Activated CD4-positive, alpha-beta T cell treated with anti-CD3 and anti-CD28 coated beads for 36 hours (primary cell): ENCODE measurements at regions of chr12 and their contacts with region 1.

Region 1: DNA sequence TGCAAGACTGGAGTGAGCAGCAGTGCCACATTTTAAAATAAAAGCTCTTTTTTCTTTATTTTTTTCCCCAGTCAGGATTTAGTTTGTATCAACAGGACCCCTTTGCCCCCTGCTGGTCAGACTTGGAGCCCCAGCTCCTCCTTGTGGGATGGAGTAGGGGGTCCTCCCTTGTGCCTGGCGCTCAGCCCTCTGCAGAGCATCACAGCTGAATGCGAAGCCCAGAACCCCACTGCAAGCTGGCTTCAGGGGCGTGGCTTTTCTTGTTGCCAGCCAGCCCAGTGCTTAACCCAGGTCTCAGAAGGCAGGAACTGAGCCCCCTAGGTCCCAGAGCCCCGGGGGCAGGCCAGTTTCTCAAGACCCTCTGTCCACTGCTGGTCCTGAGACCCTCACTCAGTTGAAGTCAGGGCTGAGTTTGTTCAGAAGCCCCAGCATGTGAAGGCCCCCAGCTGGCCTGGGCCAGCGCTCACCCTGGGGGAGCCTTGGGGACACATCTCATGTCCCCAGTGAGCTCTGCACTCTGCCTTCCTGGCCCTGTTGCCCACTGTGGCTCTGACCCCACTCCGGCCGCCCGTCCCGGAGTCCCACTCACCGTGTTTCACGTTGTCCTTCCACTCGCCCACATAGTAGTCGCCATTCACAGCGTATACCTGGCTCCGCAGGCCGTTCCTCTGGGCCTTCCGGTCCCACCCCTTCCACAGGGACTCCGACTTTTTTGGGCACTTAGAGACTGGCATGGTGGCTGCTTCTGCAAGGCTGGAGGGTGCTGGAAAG is 519 bp downstream of the MORN3 start:
- DNase-seq: peak; percentile 80
- ATAC-seq: no peak
- H3K4me3 Mint-ChIP-seq: no peak overlapping the region
- H3K27ac Mint-ChIP-seq: no peak overlapping the region
- H3K4me1 Mint-ChIP-seq: peaks cover 57% of the 10 kb centered on the region
- H3K27me3 Mint-ChIP-seq: no peaks in the 10 kb centered on the region

Region 2: GRCh38 chr12:121351820-121352681 is 316.9 kb before region 1 on chr12 and contains the start of gene ANAPC5:
- CTCF ChIA-PET with region 1: no interaction called
- POLR2A ChIA-PET with region 1: no interaction called
- intact Hi-C with region 1: loop called in 1 of 2 experiments (anchors 1 kb)
- DNase-seq: peak; percentile 94
- ATAC-seq: peak; percentile 99
- H3K4me3 Mint-ChIP-seq: peak within 1 kb of the TSS; percentile 92
- H3K27ac Mint-ChIP-seq: peak within 1 kb of the TSS; percentile 97
- H3K4me1 Mint-ChIP-seq: peaks cover 24% of the 10 kb centered on the region
- H3K27me3 Mint-ChIP-seq: peaks cover under 1% of the 10 kb centered on the region
- total RNA-seq, gene ANAPC5: 113 to 118 TPM

Region 3: DNA sequence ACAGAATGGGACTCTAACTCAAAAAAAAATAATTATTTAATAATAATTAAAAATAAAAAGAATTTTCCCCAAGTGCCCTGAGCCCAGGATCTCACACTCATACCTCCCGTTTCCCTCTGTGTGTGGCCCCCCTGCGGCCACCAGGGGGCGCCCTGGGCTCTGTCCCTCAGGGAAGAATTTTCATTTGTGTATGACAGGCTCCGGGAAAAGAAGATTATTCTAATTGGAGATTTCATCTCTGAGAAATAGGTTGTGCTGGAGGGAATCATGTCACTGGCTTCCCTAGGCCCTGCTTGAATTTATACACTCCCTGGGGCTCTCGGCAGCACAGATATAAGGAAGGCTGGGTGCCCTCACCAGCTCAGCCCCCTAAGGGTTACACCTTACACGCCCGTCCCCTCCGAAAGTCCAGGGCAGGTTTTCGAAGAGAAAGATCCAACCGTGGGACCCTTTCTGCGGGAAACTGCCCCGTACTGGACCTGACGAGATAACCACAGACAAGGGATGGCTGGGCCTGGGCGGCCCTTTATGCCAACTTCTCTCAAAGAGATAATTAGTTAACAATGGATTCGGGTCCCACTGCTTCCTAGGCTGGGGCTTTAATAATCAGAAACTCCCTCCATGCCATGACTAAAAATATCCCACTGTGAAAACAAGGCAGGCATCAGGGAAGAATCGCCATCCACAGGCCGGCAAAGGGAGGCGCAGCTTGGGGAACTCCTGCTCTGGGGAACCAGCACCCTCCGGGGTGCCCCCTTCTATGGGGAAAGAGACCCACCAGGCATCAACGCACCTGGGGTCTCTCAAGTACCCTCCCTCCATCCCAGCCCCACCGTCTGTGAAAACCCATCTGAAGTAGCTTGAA is 168.8 kb before region 1 on chr12:
- CTCF ChIA-PET with region 1: interaction called, 12 read pairs
- POLR2A ChIA-PET with region 1: no interaction called
- intact Hi-C with region 1: no loop called
- DNase-seq: peak; percentile 84
- ATAC-seq: peak; percentile 86
- H3K4me3 Mint-ChIP-seq: no peak overlapping the region
- H3K27ac Mint-ChIP-seq: no peak overlapping the region
- H3K4me1 Mint-ChIP-seq: peaks cover 13% of the 10 kb centered on the region
- H3K27me3 Mint-ChIP-seq: no peaks in the 10 kb centered on the region

Region 4: GRCh38 chr12:121579981-121580868 is 88.7 kb before region 1 on chr12:
- CTCF ChIA-PET with region 1: interaction called, 5 read pairs
- POLR2A ChIA-PET with region 1: no interaction called
- intact Hi-C with region 1: loop called in 1 of 2 experiments (anchors 2 kb)
- DNase-seq: peak; percentile 87
- ATAC-seq: peak; percentile 76
- H3K4me3 Mint-ChIP-seq: peak overlapping the region; percentile 83
- H3K27ac Mint-ChIP-seq: peak overlapping the region; percentile 99
- H3K4me1 Mint-ChIP-seq: peaks cover 24% of the 10 kb centered on the region
- H3K27me3 Mint-ChIP-seq: no peaks in the 10 kb centered on the region

Region 5: DNA sequence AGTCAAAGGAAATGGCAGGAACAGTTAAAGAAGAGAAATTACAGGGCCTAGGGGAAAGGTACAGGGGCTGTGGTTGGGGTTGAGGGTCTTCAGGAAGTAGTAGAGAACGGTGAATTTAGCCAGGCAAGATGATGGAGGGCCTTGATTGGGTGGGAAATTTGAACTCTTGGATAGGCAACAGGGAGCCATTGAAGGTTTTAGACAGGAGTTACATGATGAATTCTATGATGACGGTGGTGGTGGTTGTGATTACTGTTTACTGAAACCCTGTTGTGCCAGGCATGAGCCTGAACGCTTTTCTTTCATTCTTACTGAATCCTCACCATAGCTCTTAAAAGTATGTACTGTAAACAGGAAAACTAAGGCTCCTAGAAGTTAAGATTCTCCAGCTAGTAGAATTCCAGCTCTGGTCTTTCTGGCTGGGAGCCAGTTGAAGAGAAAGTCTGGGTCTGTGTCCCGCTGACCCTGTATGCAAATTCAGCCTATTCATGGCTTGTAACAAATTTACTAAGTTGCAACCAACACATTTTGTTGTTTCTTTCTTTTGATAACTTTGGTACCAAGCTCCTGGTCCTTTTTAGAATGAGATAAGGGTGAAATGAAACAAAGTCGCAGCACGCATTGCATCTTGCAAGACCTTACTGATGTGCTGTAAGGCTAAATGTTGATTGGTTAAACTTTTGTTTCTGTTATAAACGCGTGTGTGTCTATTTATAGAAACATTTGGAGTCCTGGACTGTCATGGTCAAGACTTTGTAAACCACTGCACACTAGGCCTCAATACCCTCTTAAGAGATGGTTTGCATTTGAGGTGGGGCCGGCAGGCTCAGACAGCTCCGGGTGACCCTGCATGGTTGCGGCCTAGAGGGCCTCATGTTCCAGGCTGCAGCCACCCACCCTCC is 36.6 kb before region 1 on chr12:
- CTCF ChIA-PET with region 1: interaction called, 29 read pairs
- POLR2A ChIA-PET with region 1: interaction called, 12 read pairs
- intact Hi-C with region 1: loop called in 1 of 2 experiments (anchors 1 kb)
- DNase-seq: no peak
- ATAC-seq: no peak
- H3K4me3 Mint-ChIP-seq: peak overlapping the region; percentile 41
- H3K27ac Mint-ChIP-seq: peak overlapping the region; percentile 99
- H3K4me1 Mint-ChIP-seq: peaks cover 73% of the 10 kb centered on the region
- H3K27me3 Mint-ChIP-seq: no peaks in the 10 kb centered on the region

Region 6: GRCh38 chr12:121657305-121658008 is 11.5 kb before region 1 on chr12:
- CTCF ChIA-PET with region 1: interaction called, 21 read pairs
- POLR2A ChIA-PET with region 1: interaction called, 5 read pairs
- intact Hi-C with region 1: loop called in 1 of 2 experiments (anchors 1 kb)
- DNase-seq: peak; percentile 65
- ATAC-seq: peak; percentile 64
- H3K4me3 Mint-ChIP-seq: peak overlapping the region; percentile 1
- H3K27ac Mint-ChIP-seq: peak overlapping the region; percentile 99
- H3K4me1 Mint-ChIP-seq: peaks cover 65% of the 10 kb centered on the region
- H3K27me3 Mint-ChIP-seq: no peaks in the 10 kb centered on the region

Region 7: DNA sequence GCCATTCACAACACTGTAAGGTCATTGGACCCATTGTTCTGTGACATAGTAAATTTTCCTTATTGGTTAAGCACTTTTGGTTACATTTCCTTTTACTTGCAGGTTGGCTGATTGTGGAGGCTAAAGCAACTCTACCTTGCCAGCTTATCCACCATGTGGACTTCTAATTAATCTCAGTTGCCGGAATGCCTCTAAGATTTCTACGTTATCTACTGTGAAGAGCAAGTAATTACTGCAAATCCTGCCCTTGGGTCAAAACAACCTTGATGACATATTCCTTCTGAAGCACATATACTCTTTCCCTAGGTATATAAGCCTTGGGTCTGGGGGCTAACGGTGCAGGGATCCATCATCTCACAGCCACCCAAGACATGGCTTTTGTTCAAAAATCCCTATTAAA is 20.0 kb after region 1 on chr12:
- CTCF ChIA-PET with region 1: interaction called, 14 read pairs
- POLR2A ChIA-PET with region 1: interaction called, 5 read pairs
- intact Hi-C with region 1: loop called in 1 of 2 experiments (anchors 1 kb)
- DNase-seq: no peak
- ATAC-seq: no peak
- H3K4me3 Mint-ChIP-seq: no peak overlapping the region
- H3K27ac Mint-ChIP-seq: no peak overlapping the region
- H3K4me1 Mint-ChIP-seq: peaks cover 7% of the 10 kb centered on the region
- H3K27me3 Mint-ChIP-seq: no peaks in the 10 kb centered on the region